ENCODE measurements at regions of chr7 and their contacts with region 1.

Region 1: GRCh38 chr7:29809533-29810155 is 3.3 kb downstream of the WIPF3 start:
- DNase-seq: no peak
- H3K4me3 ChIP-seq: no peak overlapping the region
- H3K27ac ChIP-seq: no peak overlapping the region
- H3K4me1 ChIP-seq: peaks cover 0 to 25% (median 15%) of the 10 kb centered on the region in 4 donors
- H3K27me3 ChIP-seq: peaks cover 60% of the 10 kb centered on the region
- CTCF ChIP-seq: no peak
- EP300 ChIP-seq: no peak
- POLR2A ChIP-seq: no peak

Region 2: GRCh38 chr7:29839302-29839701 is 29.7 kb after region 1 on chr7:
- in situ Hi-C with region 1: no loop called
- intact Hi-C with region 1: loop called (anchors 1 kb)
- DNase-seq: peak; percentile 12
- H3K4me3 ChIP-seq: no peak overlapping the region
- H3K27ac ChIP-seq: no peak overlapping the region
- H3K4me1 ChIP-seq: no peaks in the 10 kb centered on the region
- H3K27me3 ChIP-seq: no peaks in the 10 kb centered on the region
- CTCF ChIP-seq: no peak
- EP300 ChIP-seq: no peak
- POLR2A ChIP-seq: no peak

Region 3: DNA sequence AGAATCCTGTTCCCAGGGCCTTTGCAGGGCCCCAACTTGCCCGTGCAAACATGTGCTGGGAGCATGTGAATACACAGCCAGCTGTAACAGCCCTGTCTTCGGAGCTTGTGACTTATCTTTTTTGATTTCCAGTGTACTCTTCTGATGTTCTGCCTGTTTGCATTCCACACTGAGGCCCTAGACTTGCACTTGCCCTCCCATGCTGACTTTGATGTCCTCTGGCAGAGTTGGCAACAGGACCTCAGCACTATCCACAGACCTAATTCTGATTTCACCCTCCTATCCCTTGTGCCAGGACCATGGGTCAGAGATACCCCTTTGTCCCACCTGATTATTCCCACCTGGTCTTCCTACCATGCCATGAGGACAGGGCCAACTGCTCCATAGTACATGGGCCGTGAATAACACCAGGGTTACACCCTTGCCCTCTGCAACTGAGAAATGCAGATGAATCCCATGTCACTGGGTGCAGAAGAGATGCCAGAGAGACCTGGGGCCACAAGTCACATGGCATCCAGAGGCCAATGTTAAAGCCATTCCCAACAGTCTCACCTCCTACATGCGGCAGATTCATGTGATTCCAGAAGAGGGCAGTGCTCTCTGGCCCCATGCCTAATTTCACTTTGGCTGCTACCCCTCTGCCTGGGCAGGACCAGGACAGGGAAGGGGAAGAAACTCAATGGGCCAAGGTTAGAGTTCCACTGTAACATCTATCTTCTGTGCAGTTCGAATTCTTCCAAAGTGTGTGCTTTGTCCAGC is 137.0 kb after region 1 on chr7:
- in situ Hi-C with region 1: no loop called
- intact Hi-C with region 1: no loop called
- DNase-seq: peak; percentile 15
- H3K4me3 ChIP-seq: no peak overlapping the region
- H3K27ac ChIP-seq: no peak overlapping the region
- H3K4me1 ChIP-seq: peaks cover 0 to 7% (median 3%) of the 10 kb centered on the region in 4 donors
- H3K27me3 ChIP-seq: no peaks in the 10 kb centered on the region
- CTCF ChIP-seq: peak in 1 of 5 experiments; percentile 8
- EP300 ChIP-seq: no peak
- POLR2A ChIP-seq: no peak